ENCODE measurements at regions of chr1 and their contacts with region 1.

Region 1: DNA sequence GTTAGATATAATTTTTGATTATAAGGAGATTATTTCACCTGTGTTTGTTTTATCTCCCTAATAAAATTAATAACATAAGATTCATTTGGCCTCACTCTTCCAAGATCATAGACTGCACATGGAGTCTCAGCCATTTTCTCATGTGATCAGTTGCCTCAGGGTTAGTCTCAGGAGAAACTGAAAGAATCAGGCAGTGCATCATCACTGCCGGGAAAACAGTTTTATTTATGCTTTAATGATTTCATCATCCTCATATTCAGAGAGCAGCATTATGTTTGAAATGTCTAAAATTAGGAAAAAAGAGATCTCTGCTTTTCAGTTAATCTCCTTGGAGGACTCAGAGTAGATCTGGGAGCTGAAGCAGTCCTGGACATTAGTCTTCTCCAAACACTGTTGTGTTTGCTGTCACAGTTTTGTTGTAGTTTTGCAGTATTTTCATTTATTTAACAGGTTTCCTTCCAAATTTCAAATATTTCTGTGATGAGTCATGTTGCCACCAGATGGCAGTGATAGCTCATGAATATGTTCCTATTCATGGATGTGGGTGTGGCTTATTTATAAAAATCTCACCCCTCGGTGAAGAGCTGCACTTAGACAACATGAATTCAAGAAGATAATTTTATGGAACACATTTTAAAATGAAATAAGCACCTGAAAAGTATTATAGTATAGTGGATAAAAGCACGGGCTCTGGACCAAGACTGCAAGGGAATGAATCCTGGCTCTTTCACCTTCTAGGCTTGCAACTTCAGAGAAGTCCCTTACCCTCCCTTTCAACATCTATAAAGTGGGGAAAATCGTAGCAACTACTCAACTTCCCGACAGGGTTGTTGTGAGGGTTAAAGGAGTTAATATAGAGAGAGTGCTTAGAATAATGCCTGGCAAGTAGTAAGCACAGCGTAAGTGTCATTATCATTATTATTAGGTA is 31.2 kb downstream of the CHD1L start:
- DNase-seq: no peak
- H3K4me3 Mint-ChIP-seq: no peak overlapping the region
- H3K27ac Mint-ChIP-seq: no peak overlapping the region
- H3K4me1 Mint-ChIP-seq: peaks cover 7% of the 10 kb centered on the region
- H3K27me3 Mint-ChIP-seq: no peaks in the 10 kb centered on the region

Region 2: DNA sequence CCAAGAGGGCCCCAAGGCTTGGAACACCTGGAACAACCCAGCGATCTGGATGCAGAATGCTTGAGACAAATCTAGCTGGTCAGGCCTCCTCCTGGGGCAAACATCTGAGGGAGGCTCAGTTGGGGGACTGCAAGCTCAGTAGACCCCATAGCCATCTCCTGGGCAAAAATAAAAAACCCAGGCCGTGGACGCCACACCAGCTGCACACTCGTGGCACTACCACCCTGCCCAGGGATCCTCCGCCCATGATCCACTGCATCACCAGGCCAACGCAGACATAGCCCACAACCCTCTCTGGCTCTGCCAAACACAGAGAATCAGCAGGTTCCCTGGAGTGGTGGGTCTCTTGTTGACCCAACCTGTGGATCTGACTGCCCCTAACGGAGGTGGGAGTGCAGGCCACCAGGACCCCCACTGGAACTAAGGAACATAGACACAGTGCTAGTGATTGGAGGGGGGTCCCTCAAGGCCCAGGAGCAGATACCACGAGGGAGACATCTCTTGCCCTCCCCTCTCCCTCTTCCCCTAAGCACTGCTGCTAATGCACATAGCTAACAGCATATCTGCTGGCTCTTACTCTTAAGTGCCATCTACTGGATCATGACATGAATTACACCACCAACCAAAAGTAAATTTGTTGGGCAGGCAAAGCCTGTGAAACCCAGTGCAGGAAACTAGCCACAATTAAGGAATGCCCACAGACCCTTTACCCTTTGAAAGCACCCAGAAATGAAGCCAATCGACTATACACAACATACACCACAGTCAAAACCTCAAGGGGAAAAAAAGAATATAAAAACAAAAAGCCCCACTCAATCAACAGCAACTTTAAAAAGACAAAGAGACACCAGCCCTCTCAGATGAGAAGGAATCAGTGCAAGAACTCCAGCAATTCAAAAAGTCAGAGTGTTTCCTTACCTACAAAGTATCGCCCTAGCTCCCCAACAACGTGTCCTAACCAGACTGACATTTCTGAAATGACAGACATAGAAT is 116.2 kb after region 1 on chr1:
- intact Hi-C with region 1: loop called (anchors 2 kb)
- DNase-seq: no peak
- H3K4me3 Mint-ChIP-seq: no peak overlapping the region
- H3K27ac Mint-ChIP-seq: no peak overlapping the region
- H3K4me1 Mint-ChIP-seq: no peaks in the 10 kb centered on the region
- H3K27me3 Mint-ChIP-seq: peaks cover 16% of the 10 kb centered on the region